Psoas muscle (tissue), 8 donors: ENCODE measurements at regions of chr15 and their contacts with region 1.

Region 1: DNA sequence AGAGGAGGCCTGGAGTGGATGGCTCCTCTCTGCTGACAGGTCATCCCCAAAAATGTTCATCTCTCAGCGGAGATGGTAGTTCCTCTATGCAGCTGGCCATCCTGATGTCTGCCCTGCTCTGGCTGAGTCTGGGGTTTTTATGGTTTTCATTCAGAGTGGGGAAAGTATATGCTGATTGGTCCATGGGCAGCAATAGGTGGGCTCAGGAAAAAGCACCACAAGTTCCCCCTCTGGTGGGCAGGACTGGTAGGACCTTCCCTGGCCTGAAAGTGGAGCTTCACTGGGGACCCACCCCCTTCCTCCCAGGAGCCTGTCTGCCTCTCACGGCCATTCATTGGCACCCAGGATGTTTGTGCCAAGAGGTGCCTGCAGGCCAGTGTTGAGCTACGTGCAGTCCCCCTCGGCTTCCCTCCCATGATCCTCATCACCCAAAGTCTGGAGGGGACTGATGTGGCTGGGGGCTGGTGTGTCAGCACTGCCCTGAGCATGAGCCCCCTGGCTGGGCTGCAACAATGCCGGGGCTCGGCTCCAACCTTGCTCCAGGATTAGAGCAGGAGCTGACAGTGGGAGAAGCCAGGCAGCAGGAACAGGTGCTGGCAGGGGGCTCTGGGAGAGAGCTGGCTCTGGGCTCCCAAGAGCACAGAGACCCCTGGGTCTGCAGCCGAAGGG is 13.1 kb upstream of the BLOC1S6 start:
- DNase-seq: no peak
- ATAC-seq: no peak
- H3K4me3 ChIP-seq: no peak overlapping the region
- H3K27ac ChIP-seq: no peak overlapping the region
- H3K4me1 ChIP-seq: no peaks in the 10 kb centered on the region
- H3K27me3 ChIP-seq: peaks cover 0 to 4% (median 0%) of the 10 kb centered on the region in 3 donors
- CTCF ChIP-seq: no peak

Region 2: GRCh38 chr15:45535486-45536042 is 38.5 kb before region 1 on chr15:
- intact Hi-C with region 1: loop called in 1 of 2 experiments (anchors 5 kb)
- DNase-seq: no peak
- ATAC-seq: no peak
- H3K4me3 ChIP-seq: no peak overlapping the region
- H3K27ac ChIP-seq: no peak overlapping the region
- H3K4me1 ChIP-seq: no peaks in the 10 kb centered on the region
- H3K27me3 ChIP-seq: no peaks in the 10 kb centered on the region
- CTCF ChIP-seq: no peak